Right ventricle myocardium inferior (tissue), 1 donor: ENCODE measurements at regions of chr5 and their contacts with region 1.

Region 1: GRCh38 chr5:118791926-118792734 is 196.2 kb downstream of the DTWD2 start:
- DNase-seq: no peak
- ATAC-seq: peak; percentile 85

Region 2: DNA sequence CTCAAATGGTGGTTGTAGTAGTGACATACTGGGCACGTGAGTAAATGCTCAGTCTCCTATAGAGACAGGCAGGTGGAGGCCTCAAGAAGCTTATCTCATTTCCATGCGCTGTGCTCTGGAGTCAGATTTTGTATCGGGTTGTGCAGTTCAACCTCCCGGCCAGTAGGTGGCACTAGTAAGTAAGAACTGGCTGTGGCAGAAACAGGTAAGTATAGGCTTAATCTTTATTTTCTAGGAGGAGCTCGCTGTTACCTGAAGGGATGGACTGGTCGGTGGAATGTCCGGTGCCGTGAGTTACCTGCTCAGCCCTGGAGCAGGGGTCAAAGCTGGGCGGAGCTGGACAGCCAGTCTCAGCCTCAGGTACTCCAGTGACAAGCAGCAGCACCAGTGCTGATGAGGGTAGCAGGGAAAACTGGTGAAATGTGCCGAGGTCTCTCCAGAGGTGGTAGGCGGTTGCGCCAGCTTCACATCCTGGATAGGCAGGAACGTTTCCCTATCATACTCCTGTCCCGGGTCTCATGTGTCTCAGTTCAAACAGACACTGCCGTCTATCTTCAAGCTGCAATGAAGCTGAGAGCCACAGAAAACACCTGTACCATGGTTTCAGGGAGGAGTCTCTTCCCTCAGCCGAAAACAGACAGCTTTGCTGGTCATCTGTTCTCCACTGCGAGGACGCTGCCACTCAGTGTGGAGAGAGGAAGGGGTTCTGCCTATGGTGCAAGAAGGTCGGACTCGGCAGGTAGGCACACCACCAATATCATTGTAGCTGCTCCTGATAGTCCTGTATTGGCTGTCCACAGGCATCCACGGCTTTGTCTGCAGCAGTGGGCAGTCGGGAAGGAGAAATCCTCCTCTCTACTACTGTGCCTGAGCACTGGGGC is 1337.2 kb before region 1 on chr5:
- intact Hi-C with region 1: loop called (anchors 5 kb)
- DNase-seq: no peak
- ATAC-seq: peak; percentile 48

Region 3: DNA sequence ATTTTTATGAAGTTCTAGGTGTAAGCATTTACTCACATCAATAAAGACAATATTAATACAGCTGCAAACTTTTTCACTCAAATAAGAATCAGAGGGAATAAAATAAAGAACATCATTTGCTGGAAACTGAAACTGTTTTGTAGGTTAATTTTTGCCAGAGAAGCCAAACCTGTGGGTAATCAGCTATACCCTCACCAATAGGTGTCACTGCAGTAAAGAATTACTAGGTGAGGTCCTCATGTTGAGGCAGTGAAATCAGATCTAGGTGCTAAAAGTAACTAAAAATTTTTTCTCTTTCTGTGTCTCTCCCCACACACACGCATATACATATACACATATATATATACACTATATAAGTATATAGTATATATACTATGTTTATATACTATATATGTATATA is 1201.2 kb before region 1 on chr5:
- intact Hi-C with region 1: loop called (anchors 10 kb)
- DNase-seq: no peak
- ATAC-seq: no peak

Region 4: DNA sequence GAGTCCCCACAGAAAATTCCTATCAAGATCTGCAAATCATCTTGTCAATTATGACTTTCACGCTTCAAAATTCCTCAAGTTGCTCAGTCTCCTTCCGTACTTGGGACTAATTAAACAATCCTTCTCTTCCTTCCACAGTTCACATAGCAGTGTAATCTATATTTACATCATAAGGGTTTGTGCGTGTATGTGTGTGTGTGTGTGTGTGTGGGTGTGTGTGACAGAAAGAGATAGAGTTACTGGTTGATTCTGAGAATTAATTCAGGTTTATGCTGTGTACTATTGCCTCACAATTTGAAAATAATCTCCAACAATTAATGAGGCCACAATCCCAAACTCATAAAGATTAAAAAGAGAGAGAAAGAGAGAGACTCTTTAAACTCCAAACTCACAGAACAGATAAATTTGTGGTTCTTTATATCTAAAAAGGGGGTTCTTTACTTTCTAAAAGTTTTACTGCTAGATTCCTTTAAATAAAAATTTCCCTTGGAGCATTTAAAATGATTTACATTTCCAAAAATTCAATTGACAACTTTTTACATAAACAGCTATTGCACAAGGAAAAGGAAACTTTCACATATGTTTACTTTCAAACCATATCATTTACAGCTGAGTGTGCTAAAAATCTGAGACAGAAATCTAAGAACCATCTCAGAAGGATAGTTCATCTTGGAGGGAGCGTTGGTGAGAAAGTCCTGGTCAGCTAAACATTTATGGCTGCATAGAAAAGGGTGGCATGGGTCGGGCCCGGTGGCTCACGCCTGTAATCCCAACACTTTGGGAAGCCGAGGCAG is 39.4 kb before region 1 on chr5:
- intact Hi-C with region 1: no loop called
- DNase-seq: no peak
- ATAC-seq: no peak

Region 5: DNA sequence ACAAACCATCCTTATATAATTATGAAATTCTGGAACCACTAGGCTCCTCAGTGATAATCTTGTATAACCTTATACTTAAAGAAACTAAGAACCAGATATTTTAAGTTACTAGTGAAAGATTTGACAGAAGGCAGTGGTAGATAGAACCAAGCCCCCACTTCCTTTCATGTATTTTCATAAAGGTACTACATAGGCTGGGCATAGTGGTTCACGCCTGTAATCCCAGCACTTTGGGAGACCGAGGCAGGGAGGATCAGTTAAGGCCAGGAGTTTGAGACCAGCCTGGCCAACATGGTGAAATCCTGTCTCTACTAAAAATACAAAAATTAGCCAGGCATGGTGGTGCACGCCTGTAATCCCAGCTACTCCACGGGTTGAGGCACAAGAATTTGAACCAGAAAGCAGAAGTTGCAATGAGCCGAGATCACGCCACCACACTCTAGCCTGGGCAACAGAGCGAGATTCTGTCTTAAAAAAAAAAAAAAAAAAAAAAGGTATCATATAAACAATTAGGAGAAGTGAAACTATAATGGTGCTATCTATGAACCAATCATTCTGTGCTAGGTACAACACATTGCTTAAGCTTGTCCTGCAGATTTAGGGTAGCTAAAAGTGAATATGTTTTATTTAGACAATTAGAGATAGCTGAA is 224.1 kb after region 1 on chr5:
- intact Hi-C with region 1: no loop called
- DNase-seq: no peak
- ATAC-seq: no peak